Panc1 (cell line): ENCODE measurements at regions of chrX and their contacts with region 1.

Region 1: DNA sequence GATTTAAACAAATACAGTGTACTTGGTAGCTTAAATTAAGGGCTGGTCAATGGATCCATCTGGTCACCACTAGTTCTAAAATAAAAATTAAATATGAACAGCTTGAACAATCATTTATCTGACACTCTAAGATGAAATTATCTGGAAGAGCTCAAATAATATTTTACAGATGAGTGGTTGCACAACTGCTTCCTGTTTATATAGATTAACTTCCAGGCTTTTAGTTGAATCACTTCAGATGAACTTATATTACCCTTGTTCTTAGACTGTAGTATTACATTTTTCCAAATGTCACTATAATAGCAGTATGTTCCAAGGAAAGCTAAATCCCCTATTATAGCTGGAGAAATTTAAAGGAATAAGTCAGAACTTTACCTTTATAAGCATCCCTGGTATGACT is 92.4 kb upstream of the SMIM10 start:
- DNase-seq: no peak
- ATAC-seq: no peak
- H3K4me3 ChIP-seq: no peak overlapping the region
- H3K27ac ChIP-seq: no peak overlapping the region
- H3K4me1 ChIP-seq: peaks cover 12% of the 10 kb centered on the region; the same call in 1 of the 2 replicates
- H3K27me3 ChIP-seq: no peaks in the 10 kb centered on the region
- CTCF ChIP-seq: no peak

Region 2: DNA sequence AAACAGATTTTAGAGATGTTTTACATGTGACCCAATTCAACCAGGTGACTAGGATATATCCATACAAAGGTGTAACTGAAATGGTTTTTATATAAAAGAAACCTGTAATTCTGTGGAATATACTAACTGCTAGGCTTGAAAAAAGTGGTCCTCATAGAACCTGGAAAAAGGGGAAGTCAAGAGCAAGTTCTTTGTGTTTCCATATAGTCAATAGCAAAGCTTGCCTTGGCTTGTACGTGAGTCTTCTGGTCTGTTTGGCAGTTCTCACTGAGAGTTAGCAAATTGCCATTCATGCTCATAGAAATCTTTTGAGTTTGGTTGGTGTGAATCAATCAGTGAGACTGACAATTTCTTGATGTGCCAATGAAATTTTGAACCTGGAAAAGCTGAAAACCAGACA is 12.9 kb after region 1 on chrX:
- CTCF ChIA-PET with region 1: interaction called, 3 read pairs
- POLR2A ChIA-PET with region 1: interaction called, 11 read pairs
- in situ Hi-C with region 1: no loop called
- intact Hi-C with region 1: no loop called
- DNase-seq: no peak
- ATAC-seq: no peak
- H3K4me3 ChIP-seq: no peak overlapping the region
- H3K27ac ChIP-seq: peak overlapping the region; percentile 70
- H3K4me1 ChIP-seq: peaks cover 48% of the 10 kb centered on the region
- H3K27me3 ChIP-seq: no peaks in the 10 kb centered on the region
- CTCF ChIP-seq: no peak